Left ventricle myocardium superior (tissue), 1 donor: ENCODE measurements at regions of chr17 and their contacts with region 1.

Region 1: GRCh38 chr17:2025622-2026310 is 632 bp upstream of the RTN4RL1 start:
- DNase-seq: peak; percentile 86
- ATAC-seq: peak; percentile 71

Region 2: GRCh38 chr17:1908699-1909309 is 117.0 kb before region 1 on chr17:
- intact Hi-C with region 1: loop called (anchors 2 kb)
- DNase-seq: peak; percentile 46
- ATAC-seq: peak; percentile 82

Region 3: GRCh38 chr17:1931759-1932579 is 93.8 kb before region 1 on chr17:
- intact Hi-C with region 1: no loop called
- DNase-seq: peak; percentile 76
- ATAC-seq: peak; percentile 68